Esophagus muscularis mucosa (tissue), 4 donors: ENCODE measurements at regions of chr1 and their contacts with region 1.

Region 1: GRCh38 chr1:43529206-43529731 is 1.4 kb upstream of the PTPRF start:
- DNase-seq: peak; percentile 96
- H3K4me3 ChIP-seq: no peak overlapping the region
- H3K27ac ChIP-seq: peak overlapping the region in 3 of 4 donors; percentile 83 to 92 (median 89)
- H3K4me1 ChIP-seq: peaks cover 12 to 45% (median 42%) of the 10 kb centered on the region in 4 donors
- H3K27me3 ChIP-seq: no peaks in the 10 kb centered on the region
- CTCF ChIP-seq: peak; percentile 96 to 97 (median 97)
- EP300 ChIP-seq: no peak
- POLR2A ChIP-seq: no peak

Region 2: GRCh38 chr1:43558346-43558841 is 29.1 kb after region 1 on chr1:
- intact Hi-C with region 1: loop called (anchors 2 kb)
- DNase-seq: no peak
- H3K4me3 ChIP-seq: peak overlapping the region; percentile 13 to 37 (median 26)
- H3K27ac ChIP-seq: peak overlapping the region; percentile 76 to 88 (median 82)
- H3K4me1 ChIP-seq: peaks cover 1 to 49% (median 38%) of the 10 kb centered on the region in 4 donors
- H3K27me3 ChIP-seq: no peaks in the 10 kb centered on the region
- CTCF ChIP-seq: no peak
- EP300 ChIP-seq: no peak
- POLR2A ChIP-seq: no peak

Region 3: DNA sequence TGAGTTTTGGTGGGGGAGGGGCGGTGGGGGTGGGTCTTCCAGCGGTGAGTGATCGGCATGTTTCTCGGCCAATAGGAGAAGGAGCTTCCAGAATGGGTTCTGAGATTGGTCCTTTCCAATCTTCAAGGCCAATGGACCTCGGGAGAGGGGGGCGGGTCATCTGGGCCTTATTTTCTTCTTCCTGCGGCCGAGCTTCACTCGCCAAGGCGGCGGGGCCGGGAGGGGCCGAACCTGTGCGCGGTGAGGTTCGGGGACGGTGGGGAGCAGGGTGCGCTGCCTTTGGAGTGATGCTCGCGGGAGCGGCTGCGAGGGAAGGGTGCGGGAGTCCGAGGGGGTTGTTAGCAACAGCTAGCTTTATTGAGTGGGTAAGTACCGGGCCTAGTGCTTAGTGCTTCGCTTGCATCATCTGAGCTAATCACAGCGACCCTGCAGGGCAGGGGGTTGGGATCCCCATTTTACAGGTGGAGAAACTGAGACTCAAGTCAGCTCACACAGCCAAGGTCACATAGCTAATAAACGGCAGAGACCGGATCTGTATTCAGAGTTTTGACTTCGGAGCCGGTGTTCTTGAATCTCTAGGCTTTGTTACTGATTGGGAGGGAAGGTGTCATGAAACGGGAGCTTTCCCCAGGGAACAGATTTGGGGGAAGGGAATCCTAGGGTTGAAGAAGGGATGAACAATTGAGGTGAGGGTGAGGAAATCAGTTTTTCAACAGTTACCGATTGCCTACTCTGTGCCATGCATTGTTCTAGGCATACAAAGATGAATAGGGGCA is 121.2 kb after region 1 on chr1:
- intact Hi-C with region 1: loop called (anchors 2 kb)
- DNase-seq: peak; percentile 99
- H3K4me3 ChIP-seq: peak overlapping the region; percentile 68 to 80 (median 78)
- H3K27ac ChIP-seq: peak overlapping the region; percentile 92 to 96 (median 94)
- H3K4me1 ChIP-seq: peaks cover 19 to 36% (median 31%) of the 10 kb centered on the region in 4 donors
- H3K27me3 ChIP-seq: peaks cover 0 to under 1% (median 0%) of the 10 kb centered on the region in 4 donors
- CTCF ChIP-seq: no peak
- EP300 ChIP-seq: no peak
- POLR2A ChIP-seq: peak; percentile 94

Region 4: DNA sequence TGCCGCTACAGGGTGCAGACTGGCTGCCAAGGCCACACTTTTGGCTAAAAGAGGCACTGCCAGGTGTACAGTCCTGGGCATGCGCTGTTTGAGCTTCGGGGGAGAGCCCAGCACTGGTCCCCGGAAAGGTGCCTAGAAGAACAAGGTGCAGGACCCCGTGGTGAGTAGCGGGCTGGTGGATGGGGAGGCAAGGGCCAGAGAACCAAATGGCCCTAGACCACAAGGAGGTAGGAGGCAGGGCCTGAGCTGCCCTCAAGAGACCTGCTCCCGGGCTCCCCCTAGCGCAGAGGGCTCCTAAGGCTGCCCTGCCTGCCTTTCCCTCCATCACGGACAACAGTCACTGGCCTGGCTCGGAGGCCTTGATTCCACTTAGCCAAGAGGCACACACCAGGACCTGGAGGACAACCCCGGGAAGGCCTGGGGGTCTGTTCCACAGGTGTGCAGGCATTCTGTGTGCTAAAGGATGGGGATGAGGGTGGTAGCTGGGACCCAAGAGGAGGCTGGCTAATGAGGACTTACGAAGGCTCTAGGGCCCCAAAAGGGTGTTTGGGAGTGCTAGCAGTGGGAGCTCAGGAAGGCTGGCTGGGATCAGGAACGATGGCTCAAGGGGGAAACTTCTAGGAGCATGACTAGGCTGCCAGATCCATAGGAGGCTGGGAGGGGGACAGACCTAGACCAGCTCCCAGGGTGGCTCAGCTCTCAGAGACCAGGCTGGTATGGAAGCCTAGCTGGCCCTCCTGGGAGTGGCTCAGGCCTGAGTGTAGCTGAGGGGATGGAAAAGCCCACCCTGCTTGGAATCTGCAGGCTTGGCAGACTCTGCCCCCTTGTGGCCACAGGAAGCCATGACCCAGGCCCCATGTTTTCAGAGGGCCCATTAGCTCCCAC is 405.1 kb after region 1 on chr1:
- intact Hi-C with region 1: loop called (anchors 10 kb)
- DNase-seq: no peak
- H3K4me3 ChIP-seq: peak overlapping the region; percentile 47 to 55 (median 53)
- H3K27ac ChIP-seq: peak overlapping the region; percentile 4 to 49 (median 32)
- H3K4me1 ChIP-seq: peaks cover 20 to 44% (median 42%) of the 10 kb centered on the region in 4 donors
- H3K27me3 ChIP-seq: peaks cover 0 to 18% (median 0%) of the 10 kb centered on the region in 4 donors
- CTCF ChIP-seq: peak; percentile 89 to 92 (median 90)
- EP300 ChIP-seq: no peak
- POLR2A ChIP-seq: no peak